OCI-LY7 (cell line): ENCODE measurements at regions of chr14 and their contacts with region 1.

Region 1: DNA sequence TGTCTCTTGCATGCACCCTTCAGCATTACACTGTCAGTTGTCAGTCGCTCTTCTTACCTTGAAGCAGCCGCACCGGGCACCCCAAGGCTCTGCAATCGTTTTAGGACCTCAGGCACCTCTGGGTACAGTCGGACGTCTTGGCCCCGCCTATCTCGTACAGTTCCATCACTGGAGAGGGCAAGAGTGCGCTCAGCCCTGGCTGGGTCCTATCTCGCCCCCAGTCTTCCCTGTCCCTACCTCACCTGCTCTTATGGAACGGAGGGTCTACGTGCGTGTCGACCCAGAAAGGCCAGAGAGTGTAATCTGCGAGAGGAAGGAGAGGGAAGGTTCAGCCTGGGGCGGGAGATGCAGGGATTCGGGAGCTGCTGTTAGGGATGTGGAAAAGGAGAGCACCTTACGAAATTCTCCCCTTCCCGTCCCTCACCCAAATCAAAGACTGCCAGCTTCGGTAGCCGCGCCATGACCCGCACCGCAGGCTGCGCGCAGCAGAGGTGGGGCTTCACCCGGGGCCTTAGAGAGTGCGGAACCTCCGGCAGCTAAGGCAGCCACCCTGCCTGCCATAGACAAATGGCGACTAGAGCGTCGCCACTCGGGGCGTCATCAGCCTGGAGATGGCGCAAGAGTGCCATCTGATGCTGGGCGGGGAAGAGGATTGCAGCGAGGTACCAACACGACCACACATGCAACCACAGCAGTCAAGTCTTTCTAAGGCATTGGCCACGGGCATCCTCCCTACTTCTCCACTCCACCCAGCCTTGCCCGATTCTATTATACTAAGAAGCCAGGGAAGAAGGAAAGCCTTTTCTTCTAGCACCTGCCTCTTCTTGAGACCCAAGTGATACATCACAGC is at the start of gene MDP1:
- DNase-seq: peak; percentile 93
- H3K4me3 ChIP-seq: peak within 1 kb of the TSS; percentile 76
- H3K27ac ChIP-seq: peak within 1 kb of the TSS; percentile 70
- H3K4me1 ChIP-seq: peaks cover 28% of the 10 kb centered on the region
- CTCF ChIP-seq: peak; percentile 85
- total RNA-seq, gene MDP1: 21.5 and 23.2 TPM in 2 replicates

Region 2: GRCh38 chr14:24146978-24147760 is 68.6 kb before region 1 on chr14 and contains the start of gene RNF31:
- CTCF ChIA-PET with region 1: no interaction called
- POLR2A ChIA-PET with region 1: interaction called, 4 read pairs
- intact Hi-C with region 1: loop called (anchors 2 kb)
- DNase-seq: peak; percentile 99
- H3K4me3 ChIP-seq: peak within 1 kb of the TSS; percentile 94
- H3K27ac ChIP-seq: peak within 1 kb of the TSS; percentile 82
- H3K4me1 ChIP-seq: peaks cover 20% of the 10 kb centered on the region
- CTCF ChIP-seq: no peak
- total RNA-seq, gene RNF31: 37.8 and 66.1 TPM in 2 replicates

Region 3: GRCh38 chr14:24195191-24196070 is 20.3 kb before region 1 on chr14 and contains the start of gene TM9SF1:
- CTCF ChIA-PET with region 1: interaction called, 4 read pairs
- POLR2A ChIA-PET with region 1: interaction called, 18 read pairs
- intact Hi-C with region 1: loop called (anchors 1 kb)
- DNase-seq: peak; percentile 93
- H3K4me3 ChIP-seq: peak within 1 kb of the TSS; percentile 75
- H3K27ac ChIP-seq: peak within 1 kb of the TSS; percentile 86
- H3K4me1 ChIP-seq: peaks cover 26% of the 10 kb centered on the region
- CTCF ChIP-seq: no peak
- total RNA-seq, gene TM9SF1: 23.4 and 31.3 TPM in 2 replicates

Region 4: DNA sequence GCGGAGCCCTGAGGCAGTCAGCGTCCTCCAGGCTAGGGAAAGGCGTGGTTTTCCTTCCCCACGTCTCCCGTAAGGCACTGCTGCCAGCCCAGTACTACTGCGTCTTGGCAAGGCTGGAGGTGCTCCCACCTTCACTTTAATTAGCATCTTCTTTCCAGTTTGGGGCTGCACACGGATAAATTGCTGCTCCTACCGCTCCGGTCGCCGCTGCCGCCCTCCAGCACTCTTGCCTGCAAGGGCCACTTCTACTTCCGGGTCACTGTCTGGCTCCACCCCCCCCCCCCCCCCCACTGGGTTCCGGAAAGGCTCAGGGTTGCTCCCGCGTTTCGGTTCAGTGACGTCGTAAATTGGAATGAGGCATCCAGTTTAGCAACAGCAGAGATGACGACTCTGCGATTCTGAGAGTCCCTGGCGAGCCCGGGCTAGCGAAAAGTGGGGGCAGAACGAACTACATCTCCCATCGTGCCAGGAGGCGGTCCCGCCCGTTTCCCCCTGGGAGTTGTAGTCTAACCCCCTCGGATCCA is 16.5 kb after region 1 on chr14 and contains the start of gene NEDD8:
- CTCF ChIA-PET with region 1: no interaction called
- POLR2A ChIA-PET with region 1: interaction called, 4 read pairs
- intact Hi-C with region 1: loop called (anchors 1 kb)
- DNase-seq: peak; percentile 92
- H3K4me3 ChIP-seq: peak within 1 kb of the TSS; percentile 84
- H3K27ac ChIP-seq: peak within 1 kb of the TSS; percentile 74
- H3K4me1 ChIP-seq: peaks cover 30% of the 10 kb centered on the region
- CTCF ChIP-seq: no peak
- total RNA-seq, gene NEDD8: 167 and 285 TPM in 2 replicates

Region 5: GRCh38 chr14:24271134-24271833 is 55.6 kb after region 1 on chr14 and contains the start of gene RABGGTA:
- CTCF ChIA-PET with region 1: no interaction called
- POLR2A ChIA-PET with region 1: interaction called, 5 read pairs
- intact Hi-C with region 1: loop called (anchors 1 kb)
- DNase-seq: peak; percentile 97
- H3K4me3 ChIP-seq: peak within 1 kb of the TSS; percentile 84
- H3K27ac ChIP-seq: peak within 1 kb of the TSS; percentile 84
- H3K4me1 ChIP-seq: peaks cover 43% of the 10 kb centered on the region
- CTCF ChIP-seq: peak; percentile 80
- total RNA-seq, gene RABGGTA: 16.7 and 24.3 TPM in 2 replicates